Gastrocnemius medialis (tissue), 4 donors: ENCODE measurements at regions of chr7 and their contacts with region 1.

Region 1: GRCh38 chr7:130069978-130070860 is at the start of gene KLHDC10:
- DNase-seq: peak; percentile 97 to 99
- ATAC-seq: peak; percentile 99
- H3K4me3 ChIP-seq: peak within 1 kb of the TSS; percentile 75 to 94 (median 88)
- H3K27ac ChIP-seq: peak within 1 kb of the TSS; percentile 86 to 93 (median 88)
- H3K4me1 ChIP-seq: peaks cover 26 to 31% of the 10 kb centered on the region in 2 donors
- H3K27me3 ChIP-seq: no peaks in the 10 kb centered on the region
- CTCF ChIP-seq: peak in 1 of 5 experiments; percentile 10
- POLR2A ChIP-seq: peak; percentile 41 to 59
- total RNA-seq, gene KLHDC10: 27.6 to 46.0 (median 34.5) TPM

Region 2: DNA sequence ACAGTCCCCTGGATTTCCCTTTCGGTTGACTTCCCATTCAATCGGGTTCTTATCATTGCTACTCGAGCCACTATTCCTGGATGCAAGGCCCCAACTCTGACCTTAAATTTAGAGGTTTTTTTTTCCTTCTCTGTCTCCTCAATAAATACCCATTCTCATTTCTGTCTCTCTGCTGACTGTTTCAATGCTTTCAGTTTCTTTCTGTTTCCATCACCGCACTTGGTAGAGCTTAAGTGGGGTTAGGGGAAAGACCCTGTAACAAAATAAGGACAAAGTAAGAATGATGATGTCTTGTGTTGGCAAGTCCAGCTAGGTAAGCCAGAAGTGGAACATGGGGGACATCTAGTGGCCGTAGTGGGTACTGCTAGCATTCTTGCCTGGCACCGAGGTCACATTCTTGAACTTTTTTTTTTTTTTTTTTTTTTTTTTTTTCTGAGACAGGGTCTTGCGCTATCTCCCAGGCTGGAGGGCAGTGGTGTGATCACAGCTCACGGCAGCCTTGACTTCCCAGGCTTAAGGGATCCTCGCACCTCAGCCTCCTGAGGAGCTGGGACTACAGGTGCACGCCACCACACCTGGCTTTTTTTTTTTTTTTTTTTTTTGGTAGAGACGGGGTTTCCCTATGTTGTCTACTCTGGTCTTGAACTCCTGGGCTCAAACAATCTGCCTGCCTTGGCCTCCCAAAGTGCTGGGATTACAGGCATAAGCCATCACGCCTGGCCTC is 59.4 kb before region 1 on chr7:
- in situ Hi-C with region 1: no loop called
- intact Hi-C with region 1: no loop called
- DNase-seq: peak; percentile 54 to 84
- ATAC-seq: peak; percentile 71 to 81
- H3K4me3 ChIP-seq: no peak overlapping the region
- H3K27ac ChIP-seq: peak overlapping the region in 3 of 4 donors; percentile 50 to 76 (median 51)
- H3K4me1 ChIP-seq: peaks cover 0 to 19% of the 10 kb centered on the region in 2 donors
- H3K27me3 ChIP-seq: no peaks in the 10 kb centered on the region
- CTCF ChIP-seq: peak; percentile 83 to 95 (median 93)
- POLR2A ChIP-seq: no peak

Region 3: GRCh38 chr7:130205084-130205947 is 135.1 kb after region 1 on chr7 and contains the start of gene TMEM209:
- in situ Hi-C with region 1: no loop called
- intact Hi-C with region 1: loop called (anchors 1 kb)
- DNase-seq: peak; percentile 89 to 93
- ATAC-seq: peak; percentile 99
- H3K4me3 ChIP-seq: peak within 1 kb of the TSS; percentile 83 to 95 (median 90)
- H3K27ac ChIP-seq: peak within 1 kb of the TSS; percentile 90 to 93 (median 92)
- H3K4me1 ChIP-seq: peaks cover 4% of the 10 kb centered on the region in 2 donors
- H3K27me3 ChIP-seq: no peaks in the 10 kb centered on the region
- CTCF ChIP-seq: no peak
- POLR2A ChIP-seq: peak; percentile 35 to 62
- total RNA-seq, gene TMEM209: 5.4 to 14.0 (median 9.9) TPM

Region 4: GRCh38 chr7:130668257-130669084 is 598.3 kb after region 1 on chr7 and contains the start of gene COPG2:
- in situ Hi-C with region 1: no loop called
- intact Hi-C with region 1: loop called (anchors 2 kb)
- DNase-seq: peak; percentile 59 to 78
- ATAC-seq: peak; percentile 96 to 97
- H3K4me3 ChIP-seq: peak within 1 kb of the TSS; percentile 77 to 90 (median 82)
- H3K27ac ChIP-seq: peak within 1 kb of the TSS; percentile 78 to 91 (median 87)
- H3K4me1 ChIP-seq: peaks cover 0 to 7% of the 10 kb centered on the region in 2 donors
- H3K27me3 ChIP-seq: no peaks in the 10 kb centered on the region
- CTCF ChIP-seq: peak in 1 of 5 experiments; percentile 36
- POLR2A ChIP-seq: peak; percentile 15 to 42
- total RNA-seq, gene COPG2: 12.5 to 15.0 (median 14.0) TPM

Region 5: GRCh38 chr7:130721486-130722280 is 651.5 kb after region 1 on chr7:
- in situ Hi-C with region 1: no loop called
- intact Hi-C with region 1: loop called (anchors 2 kb)
- DNase-seq: peak; percentile 34 to 48
- ATAC-seq: peak; percentile 46 to 69
- H3K4me3 ChIP-seq: no peak overlapping the region
- H3K27ac ChIP-seq: no peak overlapping the region
- H3K4me1 ChIP-seq: no peaks in the 10 kb centered on the region
- H3K27me3 ChIP-seq: no peaks in the 10 kb centered on the region
- CTCF ChIP-seq: peak in 4 of 5 experiments; percentile 35 to 66 (median 52)
- POLR2A ChIP-seq: no peak

Region 6: DNA sequence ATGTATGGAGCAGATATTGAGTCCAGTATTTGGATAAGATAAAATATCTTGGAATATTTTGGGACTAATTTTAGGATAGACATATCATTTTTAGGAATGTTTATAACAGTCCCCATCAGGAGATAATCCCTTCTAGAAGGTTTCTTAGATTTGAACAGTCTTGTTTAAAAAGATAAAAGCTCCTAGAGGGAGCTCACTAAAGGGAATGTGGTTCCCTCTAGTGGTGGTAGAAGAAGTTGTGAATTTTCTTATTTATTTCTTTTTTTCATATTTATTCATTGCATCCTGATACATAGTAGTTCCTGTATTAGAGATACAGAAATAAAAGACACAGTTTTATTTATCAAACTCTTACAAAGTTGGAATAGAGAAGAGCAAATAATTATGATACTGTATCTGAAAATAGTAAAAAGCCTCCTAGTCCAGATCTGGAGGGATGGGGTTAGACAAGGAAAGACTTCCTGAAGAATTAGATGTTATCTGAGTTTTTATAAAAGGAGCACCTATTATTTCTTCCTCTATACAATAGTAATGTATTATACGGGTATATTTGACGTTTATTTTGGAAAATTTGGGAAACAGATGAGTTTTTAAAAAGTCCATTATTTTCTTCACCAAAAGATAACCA is 688.3 kb after region 1 on chr7:
- in situ Hi-C with region 1: loop called in 1 of 4 experiments (anchors 10 kb)
- intact Hi-C with region 1: no loop called
- DNase-seq: no peak
- ATAC-seq: peak in 1 of 2 donors; percentile 36
- H3K4me3 ChIP-seq: no peak overlapping the region
- H3K27ac ChIP-seq: no peak overlapping the region
- H3K4me1 ChIP-seq: no peaks in the 10 kb centered on the region
- H3K27me3 ChIP-seq: no peaks in the 10 kb centered on the region
- CTCF ChIP-seq: peak in 4 of 5 experiments; percentile 33 to 73 (median 46)
- POLR2A ChIP-seq: no peak

Region 7: DNA sequence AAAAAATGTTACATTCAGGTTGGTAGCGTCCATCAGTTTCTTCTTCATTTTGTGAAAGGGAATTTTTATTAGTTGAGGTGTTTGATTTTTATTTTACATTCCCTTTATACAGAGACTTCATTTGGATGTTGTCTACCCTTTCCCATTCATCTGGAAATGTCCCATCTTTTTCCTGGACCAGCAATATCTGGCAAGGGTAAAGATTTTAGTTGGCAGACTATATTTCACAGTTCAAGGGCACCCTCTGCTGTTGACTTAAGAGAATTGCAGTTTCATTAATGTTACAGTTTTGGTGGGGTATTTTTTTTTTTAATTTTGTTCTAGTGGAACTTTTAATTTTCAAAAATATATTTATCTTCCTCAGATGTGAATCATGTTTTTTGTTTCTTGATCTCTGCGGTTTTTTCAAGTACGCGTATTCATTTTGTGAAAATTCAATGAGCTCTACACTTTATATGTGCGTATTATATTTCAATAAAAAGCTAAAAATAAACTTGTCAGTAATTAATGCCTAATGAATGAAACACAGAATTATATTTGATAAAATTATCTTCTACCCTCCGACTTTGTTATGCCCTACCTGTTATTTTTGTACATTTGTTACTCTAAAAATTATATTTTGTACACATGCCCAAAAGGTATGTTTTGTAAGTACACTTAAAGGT is 761.7 kb after region 1 on chr7:
- in situ Hi-C with region 1: no loop called
- intact Hi-C with region 1: loop called (anchors 1 kb)
- DNase-seq: no peak
- ATAC-seq: peak in 1 of 2 donors; percentile 34
- H3K4me3 ChIP-seq: no peak overlapping the region
- H3K27ac ChIP-seq: no peak overlapping the region
- H3K4me1 ChIP-seq: peaks cover 0 to 10% of the 10 kb centered on the region in 2 donors
- H3K27me3 ChIP-seq: no peaks in the 10 kb centered on the region
- CTCF ChIP-seq: peak; percentile 50 to 73 (median 71)
- POLR2A ChIP-seq: no peak